ENCODE measurements at regions of chr7 and their contacts with region 1.

Region 1: DNA sequence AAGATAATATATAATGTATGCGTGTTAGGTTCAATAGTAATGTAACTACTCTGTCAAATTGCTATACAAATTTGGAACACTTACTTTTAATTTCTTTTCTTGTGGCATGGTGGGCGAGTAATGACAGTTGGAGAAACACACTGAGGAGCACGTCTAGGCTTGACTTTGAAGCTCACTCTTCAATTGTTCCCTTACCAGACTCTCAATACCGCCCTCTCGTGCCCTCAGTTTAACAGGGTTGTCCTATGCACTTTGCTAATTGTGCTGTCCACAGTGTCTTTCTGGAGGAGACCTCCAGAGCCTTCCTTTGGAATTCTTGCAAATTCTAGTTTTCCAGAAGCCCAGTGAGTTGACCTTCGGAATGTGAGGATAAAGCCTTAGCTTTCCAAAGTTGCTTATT is 107.2 kb upstream of the RELN start:
- DNase-seq: peak in 3 of 4 experiments; percentile 41 to 86 (median 72)
- ATAC-seq: peak; percentile 93
- H3K4me3 ChIP-seq: no peak overlapping the region
- H3K27ac ChIP-seq: no peak overlapping the region
- H3K4me1 ChIP-seq: peaks cover 5 to 17% of the 10 kb centered on the region in 2 experiments; a peak in 4 of 5 replicates
- H3K27me3 ChIP-seq: no peaks in the 10 kb centered on the region
- CTCF ChIP-seq: peak; percentile 74 to 76 (median 75)
- EP300 ChIP-seq: no peak
- POLR2A ChIP-seq: no peak
- RAD21 ChIP-seq: peak; percentile 81 to 87

Region 2: DNA sequence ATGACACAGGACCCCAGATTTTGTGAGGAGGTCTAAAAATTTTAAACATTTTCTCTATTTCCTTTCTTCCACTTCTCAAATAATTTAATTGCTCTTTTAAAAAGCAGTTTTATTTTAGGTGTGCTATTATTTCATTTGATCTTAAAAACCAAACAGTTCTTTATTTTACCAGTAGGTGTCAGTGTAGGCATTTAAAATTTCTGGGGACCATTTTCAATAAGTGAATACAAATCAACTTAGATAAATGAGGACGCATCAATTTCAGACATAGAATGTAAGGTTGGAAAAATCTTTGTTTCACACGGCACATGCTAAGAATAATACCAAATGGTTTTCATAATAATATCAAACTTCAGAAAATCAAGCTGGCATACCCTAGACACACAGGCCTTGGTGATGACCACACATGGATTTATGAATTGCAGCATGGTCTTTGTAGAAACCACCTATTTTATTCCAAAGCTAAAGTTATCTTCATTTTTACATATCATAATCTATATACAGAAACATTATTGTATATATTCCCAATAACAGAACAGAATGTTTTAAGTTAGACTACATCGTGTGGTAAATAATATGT is 523.1 kb before region 1 on chr7:
- CTCF ChIA-PET with region 1: interaction called, 14 read pairs
- POLR2A ChIA-PET with region 1: no interaction called
- in situ Hi-C with region 1: no loop called
- intact Hi-C with region 1: loop called (anchors 10 kb)
- DNase-seq: peak; percentile 29 to 48 (median 34)
- ATAC-seq: peak; percentile 46; the same call in 1 of the 3 replicates
- H3K4me3 ChIP-seq: no peak overlapping the region
- H3K27ac ChIP-seq: no peak overlapping the region
- H3K4me1 ChIP-seq: no peaks in the 10 kb centered on the region
- H3K27me3 ChIP-seq: no peaks in the 10 kb centered on the region
- CTCF ChIP-seq: peak in 2 of 3 experiments; percentile 50 to 82; a peak in 3 of 6 replicates
- EP300 ChIP-seq: no peak
- POLR2A ChIP-seq: no peak
- RAD21 ChIP-seq: peak; percentile 90 to 95

Region 3: GRCh38 chr7:103766660-103767059 is 330.0 kb before region 1 on chr7:
- CTCF ChIA-PET with region 1: no interaction called
- POLR2A ChIA-PET with region 1: no interaction called
- in situ Hi-C with region 1: no loop called
- intact Hi-C with region 1: loop called (anchors 10 kb)
- DNase-seq: no peak
- ATAC-seq: no peak
- H3K4me3 ChIP-seq: no peak overlapping the region
- H3K27ac ChIP-seq: no peak overlapping the region
- H3K4me1 ChIP-seq: no peaks in the 10 kb centered on the region
- H3K27me3 ChIP-seq: no peaks in the 10 kb centered on the region
- CTCF ChIP-seq: no peak
- EP300 ChIP-seq: no peak
- POLR2A ChIP-seq: no peak
- RAD21 ChIP-seq: no peak

Region 4: GRCh38 chr7:103915680-103916357 is 180.9 kb before region 1 on chr7:
- CTCF ChIA-PET with region 1: no interaction called
- POLR2A ChIA-PET with region 1: no interaction called
- in situ Hi-C with region 1: no loop called
- intact Hi-C with region 1: loop called (anchors 10 kb)
- DNase-seq: peak; percentile 59 to 90 (median 70)
- ATAC-seq: peak; percentile 86
- H3K4me3 ChIP-seq: no peak overlapping the region
- H3K27ac ChIP-seq: peak overlapping the region; percentile 61; the same call in 2 of the 3 replicates
- H3K4me1 ChIP-seq: peaks cover 15 to 44% of the 10 kb centered on the region in 2 experiments
- H3K27me3 ChIP-seq: no peaks in the 10 kb centered on the region
- CTCF ChIP-seq: no peak
- EP300 ChIP-seq: peak; percentile 79
- POLR2A ChIP-seq: no peak
- RAD21 ChIP-seq: no peak

Measured in K562 (cell line).